HAP-1 (cell line): ENCODE measurements at regions of chr14 and their contacts with region 1.

Region 1: GRCh38 chr14:50109342-50109741 is 7.0 kb downstream of the VCPKMT start:
- DNase-seq: no peak
- H3K4me3 ChIP-seq: no peak overlapping the region
- H3K4me1 ChIP-seq: peaks cover 3% of the 10 kb centered on the region; the same call in 1 of the 2 replicates
- H3K27me3 ChIP-seq: no peaks in the 10 kb centered on the region

Region 2: GRCh38 chr14:49633640-49634546 is 475.4 kb before region 1 on chr14:
- in situ Hi-C with region 1: loop called (anchors 10 kb)
- DNase-seq: peak; percentile 91 to 95
- H3K4me3 ChIP-seq: peak overlapping the region; percentile 88
- H3K4me1 ChIP-seq: peaks cover 23% of the 10 kb centered on the region
- H3K27me3 ChIP-seq: no peaks in the 10 kb centered on the region

Region 3: GRCh38 chr14:50173891-50174290 is 64.5 kb after region 1 on chr14:
- in situ Hi-C with region 1: no loop called
- DNase-seq: no peak
- H3K4me3 ChIP-seq: no peak overlapping the region
- H3K4me1 ChIP-seq: no peaks in the 10 kb centered on the region
- H3K27me3 ChIP-seq: no peaks in the 10 kb centered on the region

Region 4: GRCh38 chr14:50403419-50403818 is 294.1 kb after region 1 on chr14:
- in situ Hi-C with region 1: no loop called
- DNase-seq: no peak
- H3K4me3 ChIP-seq: no peak overlapping the region
- H3K4me1 ChIP-seq: no peaks in the 10 kb centered on the region; the same call in 1 of the 2 replicates
- H3K27me3 ChIP-seq: no peaks in the 10 kb centered on the region